Panc1 (cell line): ENCODE measurements at regions of chr9 and their contacts with region 1.

Region 1: GRCh38 chr9:70043689-70044489 is at the start of gene MAMDC2:
- DNase-seq: no peak
- ATAC-seq: peak; percentile 77
- H3K4me3 ChIP-seq: peak within 1 kb of the TSS; percentile 23 to 41
- H3K27ac ChIP-seq: no peak within 1 kb of the TSS
- H3K4me1 ChIP-seq: no peaks in the 10 kb centered on the region
- H3K27me3 ChIP-seq: no peaks in the 10 kb centered on the region
- CTCF ChIP-seq: no peak
- total RNA-seq, gene MAMDC2: 1.5 TPM

Region 2: GRCh38 chr9:69981686-69982450 is 62.0 kb before region 1 on chr9:
- CTCF ChIA-PET with region 1: no interaction called
- POLR2A ChIA-PET with region 1: no interaction called
- in situ Hi-C with region 1: no loop called
- intact Hi-C with region 1: no loop called
- DNase-seq: no peak
- ATAC-seq: no peak
- H3K4me3 ChIP-seq: no peak overlapping the region
- H3K27ac ChIP-seq: no peak overlapping the region
- H3K4me1 ChIP-seq: no peaks in the 10 kb centered on the region
- H3K27me3 ChIP-seq: no peaks in the 10 kb centered on the region
- CTCF ChIP-seq: no peak

Region 3: GRCh38 chr9:70111042-70111602 is 67.2 kb after region 1 on chr9:
- CTCF ChIA-PET with region 1: no interaction called
- POLR2A ChIA-PET with region 1: no interaction called
- in situ Hi-C with region 1: no loop called
- intact Hi-C with region 1: loop called (anchors 1 kb)
- DNase-seq: no peak
- ATAC-seq: peak; percentile 78
- H3K4me3 ChIP-seq: no peak overlapping the region
- H3K27ac ChIP-seq: no peak overlapping the region
- H3K4me1 ChIP-seq: no peaks in the 10 kb centered on the region
- H3K27me3 ChIP-seq: no peaks in the 10 kb centered on the region
- CTCF ChIP-seq: peak; percentile 82